ENCODE measurements at regions of chr1 and their contacts with region 1.

Region 1: DNA sequence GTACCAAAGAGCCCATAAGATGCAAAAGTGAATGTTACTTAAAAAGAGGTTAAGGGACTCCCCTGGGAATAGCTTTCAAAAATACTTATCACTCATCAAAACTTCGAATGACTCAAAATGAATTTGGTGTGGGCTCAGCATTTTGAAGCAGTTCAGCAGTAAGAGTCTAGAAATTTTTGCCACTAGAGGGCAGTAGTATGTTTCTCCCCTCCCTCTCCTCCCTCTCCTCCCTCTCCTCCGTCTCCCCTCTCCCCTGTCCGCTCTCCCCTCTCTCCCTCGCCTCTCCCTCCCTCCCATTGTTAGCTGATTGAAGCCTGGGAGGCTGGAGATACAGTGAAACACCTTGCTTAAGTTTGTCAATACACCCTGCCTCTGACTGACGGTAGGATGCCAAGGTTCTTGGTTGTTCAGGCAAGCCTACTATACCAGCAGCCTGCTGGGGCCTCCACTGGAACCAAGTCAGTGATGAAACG is 70.8 kb upstream of the TENT5C start:
- DNase-seq: no peak
- H3K4me3 ChIP-seq: no peak overlapping the region
- H3K27me3 ChIP-seq: no peaks in the 10 kb centered on the region
- CTCF ChIP-seq: peak; percentile 68

Region 2: GRCh38 chr1:117392771-117393170 is 142.3 kb before region 1 on chr1:
- CTCF ChIA-PET with region 1: no interaction called
- POLR2A ChIA-PET with region 1: no interaction called
- DNase-seq: no peak
- H3K4me3 ChIP-seq: no peak overlapping the region
- H3K27me3 ChIP-seq: no peaks in the 10 kb centered on the region
- CTCF ChIP-seq: no peak

Region 3: DNA sequence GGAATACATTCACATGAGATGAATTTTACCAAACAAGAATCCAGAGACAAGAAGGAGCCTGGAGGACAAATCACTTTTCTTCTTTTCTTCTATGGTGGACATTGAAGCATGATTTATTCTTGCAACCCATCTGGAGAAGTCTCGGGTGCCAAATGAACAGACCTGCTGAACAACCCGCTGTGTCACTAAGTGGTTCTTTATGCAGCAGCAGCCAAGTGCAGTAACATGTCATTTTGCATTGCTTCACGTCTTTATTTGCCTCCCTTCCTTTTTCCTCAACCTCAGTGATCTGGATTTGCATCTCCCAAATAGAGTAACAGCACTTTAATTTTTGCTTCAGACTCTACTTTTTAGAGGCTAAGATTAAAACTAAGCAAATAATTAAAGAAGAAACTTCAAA is 20.8 kb after region 1 on chr1:
- CTCF ChIA-PET with region 1: interaction called, 13 read pairs
- POLR2A ChIA-PET with region 1: no interaction called
- DNase-seq: no peak
- H3K4me3 ChIP-seq: no peak overlapping the region
- H3K27me3 ChIP-seq: peaks cover 2% of the 10 kb centered on the region
- CTCF ChIP-seq: no peak

Region 4: DNA sequence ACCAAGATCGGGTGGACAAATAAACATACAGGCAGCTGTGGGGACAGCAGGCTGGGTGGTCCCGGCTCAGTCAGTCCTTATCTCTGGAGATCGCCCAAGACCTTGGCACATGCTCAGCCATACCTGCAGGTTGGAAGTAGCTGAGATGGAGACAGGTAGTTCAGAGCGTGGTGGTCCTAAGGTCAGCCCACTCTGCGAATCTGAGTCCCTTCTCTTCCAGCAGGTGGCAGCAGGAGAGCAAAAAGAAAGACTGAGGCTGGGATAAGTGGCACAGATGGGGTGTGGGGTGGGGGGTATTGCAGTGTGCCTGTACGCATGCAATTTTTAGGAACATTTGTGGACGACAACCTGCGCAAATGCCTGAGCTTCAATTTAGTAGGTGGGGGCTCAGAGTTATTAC is 175.7 kb after region 1 on chr1:
- CTCF ChIA-PET with region 1: interaction called, 12 read pairs
- POLR2A ChIA-PET with region 1: no interaction called
- DNase-seq: no peak
- H3K4me3 ChIP-seq: no peak overlapping the region
- H3K27me3 ChIP-seq: no peaks in the 10 kb centered on the region
- CTCF ChIP-seq: peak; percentile 40